Left ventricle myocardium inferior (tissue), 1 donor: ENCODE measurements at regions of chr4 and their contacts with region 1.

Region 1: GRCh38 chr4:24489870-24490269 is 94.5 kb downstream of the DHX15 start:
- DNase-seq: peak; percentile 65
- H3K4me3 ChIP-seq: no peak overlapping the region
- H3K27ac ChIP-seq: peak overlapping the region; percentile 27
- H3K4me1 ChIP-seq: no peaks in the 10 kb centered on the region
- H3K27me3 ChIP-seq: peaks cover 2% of the 10 kb centered on the region
- CTCF ChIP-seq: no peak

Region 2: DNA sequence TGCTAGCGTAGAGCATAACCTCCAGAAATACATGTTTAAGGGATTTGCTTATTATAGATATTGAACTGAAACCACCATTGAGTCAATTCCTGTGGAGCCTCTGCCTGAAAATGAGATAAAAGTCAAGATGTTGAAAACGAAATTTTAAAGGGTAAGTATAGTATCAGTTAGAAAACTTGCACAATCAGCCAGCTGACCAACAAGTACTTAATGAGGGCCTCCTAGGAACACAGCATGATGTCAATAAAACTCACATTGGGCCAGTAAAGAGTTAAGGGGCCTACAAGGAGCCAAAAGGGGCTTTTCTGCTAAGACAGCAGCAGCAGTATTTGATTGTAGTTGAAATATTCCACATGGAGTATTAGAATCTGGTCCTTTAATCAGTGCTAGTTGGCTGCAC is 285.9 kb before region 1 on chr4:
- intact Hi-C with region 1: no loop called
- DNase-seq: no peak
- H3K4me3 ChIP-seq: no peak overlapping the region
- H3K27ac ChIP-seq: no peak overlapping the region
- H3K4me1 ChIP-seq: no peaks in the 10 kb centered on the region
- H3K27me3 ChIP-seq: no peaks in the 10 kb centered on the region
- CTCF ChIP-seq: no peak

Region 3: GRCh38 chr4:24664956-24665355 is 175.1 kb after region 1 on chr4:
- intact Hi-C with region 1: loop called (anchors 10 kb)
- DNase-seq: no peak
- H3K4me3 ChIP-seq: no peak overlapping the region
- H3K27ac ChIP-seq: peak overlapping the region; percentile 63
- H3K4me1 ChIP-seq: no peaks in the 10 kb centered on the region
- H3K27me3 ChIP-seq: peaks cover 16% of the 10 kb centered on the region
- CTCF ChIP-seq: no peak

Region 4: GRCh38 chr4:24690436-24690835 is 200.6 kb after region 1 on chr4:
- intact Hi-C with region 1: loop called (anchors 10 kb)
- DNase-seq: no peak
- H3K4me3 ChIP-seq: no peak overlapping the region
- H3K27ac ChIP-seq: peak overlapping the region; percentile 17
- H3K4me1 ChIP-seq: no peaks in the 10 kb centered on the region
- H3K27me3 ChIP-seq: no peaks in the 10 kb centered on the region
- CTCF ChIP-seq: no peak

Region 5: GRCh38 chr4:24705016-24705753 is 215.3 kb after region 1 on chr4:
- intact Hi-C with region 1: no loop called
- DNase-seq: no peak
- H3K4me3 ChIP-seq: no peak overlapping the region
- H3K27ac ChIP-seq: no peak overlapping the region
- H3K4me1 ChIP-seq: no peaks in the 10 kb centered on the region
- H3K27me3 ChIP-seq: no peaks in the 10 kb centered on the region
- CTCF ChIP-seq: no peak